ENCODE measurements at regions of chr19 and their contacts with region 1.

Region 1: GRCh38 chr19:16035601-16036297 is 40.5 kb upstream of the TPM4 start:
- DNase-seq: no peak
- ATAC-seq: no peak
- H3K4me3 Mint-ChIP-seq: no peak overlapping the region
- H3K27ac Mint-ChIP-seq: no peak overlapping the region
- H3K4me1 Mint-ChIP-seq: peaks cover 0 to 6% (median 4%) of the 10 kb centered on the region in 4 donors
- H3K27me3 Mint-ChIP-seq: no peaks in the 10 kb centered on the region

Region 2: GRCh38 chr19:14676762-14677161 is 1359.0 kb before region 1 on chr19:
- POLR2A ChIA-PET with region 1: interaction called, 12 read pairs
- DNase-seq: no peak
- ATAC-seq: no peak
- H3K4me3 Mint-ChIP-seq: no peak overlapping the region
- H3K27ac Mint-ChIP-seq: no peak overlapping the region
- H3K4me1 Mint-ChIP-seq: peaks cover 0 to 23% (median 0%) of the 10 kb centered on the region in 4 donors
- H3K27me3 Mint-ChIP-seq: peaks cover 8 to 31% (median 24%) of the 10 kb centered on the region in 5 donors

Region 3: DNA sequence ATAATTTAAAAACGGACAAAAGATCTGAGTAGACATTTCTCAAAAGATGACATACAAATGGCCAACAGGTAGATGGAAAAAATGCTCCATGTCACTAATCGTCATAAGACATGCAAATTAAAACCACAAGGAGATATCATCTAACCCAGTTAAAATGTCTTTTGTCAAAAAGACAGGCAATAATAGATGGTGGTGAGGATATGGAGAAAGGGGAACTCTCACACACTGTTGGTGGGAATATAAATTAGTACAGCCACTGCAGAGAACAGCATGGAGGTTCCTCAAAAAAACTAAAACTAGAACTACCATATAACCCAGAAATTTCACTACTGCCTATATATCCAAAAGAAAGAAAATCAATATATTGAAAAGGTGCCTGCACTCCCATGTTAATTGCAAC is 49.0 kb before region 1 on chr19:
- POLR2A ChIA-PET with region 1: no interaction called
- DNase-seq: no peak
- ATAC-seq: no peak
- H3K4me3 Mint-ChIP-seq: no peak overlapping the region
- H3K27ac Mint-ChIP-seq: no peak overlapping the region
- H3K4me1 Mint-ChIP-seq: peaks cover 0 to 15% (median 0%) of the 10 kb centered on the region in 4 donors
- H3K27me3 Mint-ChIP-seq: peaks cover 26 to 44% (median 37%) of the 10 kb centered on the region in 5 donors

Region 4: GRCh38 chr19:16013181-16013850 is 22.4 kb before region 1 on chr19:
- POLR2A ChIA-PET with region 1: no interaction called
- DNase-seq: no peak
- ATAC-seq: no peak
- H3K4me3 Mint-ChIP-seq: no peak overlapping the region
- H3K27ac Mint-ChIP-seq: peak overlapping the region in 2 of 10 donors; percentile 8 to 74
- H3K4me1 Mint-ChIP-seq: peaks cover 0 to 2% (median 0%) of the 10 kb centered on the region in 4 donors
- H3K27me3 Mint-ChIP-seq: no peaks in the 10 kb centered on the region

Region 5: GRCh38 chr19:16025108-16026101 is 10.3 kb before region 1 on chr19:
- POLR2A ChIA-PET with region 1: no interaction called
- DNase-seq: no peak
- ATAC-seq: no peak
- H3K4me3 Mint-ChIP-seq: no peak overlapping the region
- H3K27ac Mint-ChIP-seq: no peak overlapping the region
- H3K4me1 Mint-ChIP-seq: peaks cover 0 to 2% (median 0%) of the 10 kb centered on the region in 4 donors
- H3K27me3 Mint-ChIP-seq: no peaks in the 10 kb centered on the region

Measured in naive thymus-derived CD8-positive, alpha-beta T cell (primary cell).